Activated CD4-positive, alpha-beta memory T cell treated with anti-CD3 and anti-CD28 coated beads, Interleukin-2, amount 10 ng/mL, durations not matched to agents 7 days and 5 days (primary cell): ENCODE measurements at regions of chr1 and their contacts with region 1.

Region 1: GRCh38 chr1:207321079-207321789 is at the start of gene CD55:
- DNase-seq: peak; percentile 100
- H3K4me3 Mint-ChIP-seq: peak within 1 kb of the TSS; percentile 84
- H3K27ac Mint-ChIP-seq: peak within 1 kb of the TSS; percentile 96
- H3K4me1 Mint-ChIP-seq: peaks cover 33% of the 10 kb centered on the region
- H3K27me3 Mint-ChIP-seq: peaks cover 4% of the 10 kb centered on the region
- total RNA-seq, gene CD55: 82.1 to 86.2 TPM

Region 2: GRCh38 chr1:207282058-207282457 is 39.2 kb before region 1 on chr1:
- CTCF ChIA-PET with region 1: no interaction called
- POLR2A ChIA-PET with region 1: interaction called, 10 read pairs
- DNase-seq: no peak
- H3K4me3 Mint-ChIP-seq: no peak overlapping the region
- H3K27ac Mint-ChIP-seq: no peak overlapping the region
- H3K4me1 Mint-ChIP-seq: peaks cover 30% of the 10 kb centered on the region
- H3K27me3 Mint-ChIP-seq: peaks cover 7% of the 10 kb centered on the region

Region 3: GRCh38 chr1:207336559-207337467 is 15.6 kb after region 1 on chr1:
- CTCF ChIA-PET with region 1: interaction called, 40 read pairs
- POLR2A ChIA-PET with region 1: interaction called, 182 read pairs
- DNase-seq: peak; percentile 53
- H3K4me3 Mint-ChIP-seq: peak overlapping the region; percentile 56
- H3K27ac Mint-ChIP-seq: peak overlapping the region; percentile 92
- H3K4me1 Mint-ChIP-seq: peaks cover 61% of the 10 kb centered on the region
- H3K27me3 Mint-ChIP-seq: no peaks in the 10 kb centered on the region

Region 4: DNA sequence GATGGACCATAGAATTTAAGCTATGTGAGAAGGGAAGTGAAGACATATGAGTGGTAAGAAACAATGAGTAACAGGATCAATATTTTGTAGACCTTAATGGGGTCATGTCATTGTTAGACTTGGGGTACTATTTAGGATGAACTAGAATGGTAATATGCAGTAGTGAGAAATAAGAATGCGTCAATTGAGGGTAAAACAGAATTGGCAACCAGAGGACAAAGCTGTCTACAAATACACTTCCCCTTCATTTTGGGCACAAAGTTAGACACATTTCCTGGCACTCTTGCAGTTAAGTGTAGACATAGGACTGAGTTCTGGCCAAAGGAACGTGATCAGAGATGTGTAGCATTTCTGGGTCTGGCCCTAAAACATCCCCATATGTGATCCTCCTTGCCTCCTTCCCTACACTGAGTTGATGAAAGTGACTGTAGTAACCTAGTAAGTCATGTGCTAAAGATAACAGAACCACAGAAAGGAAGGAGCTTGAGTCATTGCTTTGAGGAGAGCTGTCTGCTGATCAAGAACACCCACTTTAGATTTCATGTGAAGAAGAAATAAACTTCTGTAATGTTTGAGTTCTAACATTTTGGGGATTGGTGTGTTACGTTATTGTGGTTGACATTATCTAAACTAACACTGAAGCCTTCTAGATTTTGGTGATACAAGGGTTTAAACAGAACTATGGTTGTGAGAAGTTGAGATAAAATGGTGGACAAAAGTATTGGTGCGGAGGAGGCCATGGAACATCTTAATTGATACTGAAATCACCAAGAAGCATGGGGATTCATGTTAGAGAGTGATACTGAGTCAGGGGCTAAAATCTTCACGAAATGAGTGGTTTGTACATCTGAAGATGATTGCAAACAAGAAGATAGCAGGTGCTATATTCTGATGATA is 42.0 kb after region 1 on chr1:
- CTCF ChIA-PET with region 1: interaction called, 7 read pairs
- POLR2A ChIA-PET with region 1: interaction called, 14 read pairs
- DNase-seq: no peak
- H3K4me3 Mint-ChIP-seq: no peak overlapping the region
- H3K27ac Mint-ChIP-seq: no peak overlapping the region
- H3K4me1 Mint-ChIP-seq: no peaks in the 10 kb centered on the region
- H3K27me3 Mint-ChIP-seq: no peaks in the 10 kb centered on the region

Region 5: GRCh38 chr1:207404849-207405525 is 83.8 kb after region 1 on chr1:
- CTCF ChIA-PET with region 1: interaction called, 12 read pairs
- POLR2A ChIA-PET with region 1: interaction called, 8 read pairs
- DNase-seq: no peak
- H3K4me3 Mint-ChIP-seq: no peak overlapping the region
- H3K27ac Mint-ChIP-seq: no peak overlapping the region
- H3K4me1 Mint-ChIP-seq: peaks cover 11% of the 10 kb centered on the region
- H3K27me3 Mint-ChIP-seq: peaks cover 3% of the 10 kb centered on the region

Region 6: GRCh38 chr1:207672522-207673130 is 351.4 kb after region 1 on chr1:
- CTCF ChIA-PET with region 1: no interaction called
- POLR2A ChIA-PET with region 1: no interaction called
- DNase-seq: no peak
- H3K4me3 Mint-ChIP-seq: no peak overlapping the region
- H3K27ac Mint-ChIP-seq: no peak overlapping the region
- H3K4me1 Mint-ChIP-seq: no peaks in the 10 kb centered on the region
- H3K27me3 Mint-ChIP-seq: peaks cover 60% of the 10 kb centered on the region